ENCODE measurements at regions of chr7 and their contacts with region 1.

Region 1: DNA sequence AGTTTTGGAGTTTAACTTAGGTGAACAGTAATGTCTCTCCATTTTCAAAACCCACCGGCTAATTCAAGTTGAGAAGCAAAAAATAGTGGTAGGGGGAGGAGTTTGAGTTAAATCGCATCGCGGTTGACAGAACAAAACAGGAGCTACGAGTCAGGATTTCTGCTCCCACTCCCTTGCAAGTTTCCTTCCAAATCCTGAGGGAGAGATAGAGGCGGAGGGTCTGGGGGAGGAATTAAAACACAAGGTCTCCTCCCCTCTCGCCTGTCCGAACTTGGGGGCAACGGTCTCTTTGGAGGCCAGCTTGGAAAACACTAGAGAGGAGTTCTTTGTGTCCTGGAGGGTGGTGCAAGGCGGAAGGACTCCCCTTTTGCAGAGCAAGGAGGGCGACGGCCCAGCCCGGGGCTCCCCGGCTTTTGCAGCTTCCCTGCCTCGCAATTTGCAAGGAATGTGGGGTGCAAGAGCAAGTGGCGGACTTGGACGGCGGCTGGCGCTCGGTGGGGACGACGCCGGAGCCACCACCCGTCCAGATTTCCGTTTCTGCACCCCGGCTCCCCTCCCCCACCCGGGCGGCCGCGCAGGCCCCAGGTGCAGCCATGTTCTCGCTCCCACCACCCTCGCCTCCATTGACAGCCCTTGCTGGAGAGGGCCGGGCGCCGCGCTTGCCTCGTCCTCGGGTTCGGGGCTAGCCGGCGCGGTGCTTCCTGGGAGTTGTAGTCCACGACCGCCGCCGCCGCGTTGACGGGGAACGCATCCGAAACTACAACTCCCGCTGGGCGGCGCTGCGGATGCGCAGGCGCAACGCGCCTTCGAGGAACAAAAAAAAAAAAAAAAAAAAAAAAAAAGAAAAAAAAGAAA is 454 bp upstream of the GTF2I start:
- DNase-seq: peak; percentile 95 to 100 (median 99)

Region 2: GRCh38 chr7:74254129-74254857 is 402.8 kb before region 1 on chr7 and contains the start of gene RFC2:
- intact Hi-C with region 1: loop called (anchors 5 kb)
- DNase-seq: peak; percentile 95 to 100 (median 97)

Region 3: DNA sequence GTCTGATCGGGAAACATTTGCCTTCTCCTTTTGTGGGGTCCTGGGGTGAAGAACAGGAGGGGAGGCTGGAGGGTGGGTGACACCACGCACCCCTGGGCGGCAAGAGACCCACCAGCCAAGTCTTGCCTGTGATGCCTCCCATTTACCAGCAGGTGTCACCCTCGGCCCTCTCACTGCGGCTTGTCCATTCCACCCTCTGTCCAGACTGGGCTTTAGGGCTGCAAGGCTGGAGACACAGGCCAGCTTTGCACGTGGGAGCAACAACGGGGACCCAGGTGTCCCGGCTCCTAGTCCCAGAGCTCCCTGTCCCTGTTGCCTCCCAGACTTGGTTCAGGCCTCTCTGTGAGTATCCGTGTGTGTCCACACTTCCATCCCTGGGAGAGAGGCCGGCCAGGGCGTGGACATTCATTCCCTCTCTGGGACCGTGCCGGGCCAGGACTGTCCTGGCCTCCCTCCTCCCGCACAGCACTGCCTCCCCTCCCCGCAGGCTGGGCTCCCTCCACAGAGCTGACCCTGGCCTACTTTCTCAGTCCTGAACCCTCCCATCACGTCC is 239.6 kb before region 1 on chr7:
- intact Hi-C with region 1: loop called (anchors 10 kb)
- DNase-seq: peak; percentile 47 to 96 (median 74)

Region 4: GRCh38 chr7:74449809-74450397 is 207.2 kb before region 1 on chr7:
- intact Hi-C with region 1: loop called (anchors 10 kb)
- DNase-seq: peak in 4 of 10 donors; percentile 44 to 64 (median 50)